MCF 10A (cell line): ENCODE measurements at regions of chr12 and their contacts with region 1.

Region 1: GRCh38 chr12:91382081-91382543 is 199.5 kb upstream of the DCN start:
- DNase-seq: peak; percentile 84
- H3K4me3 Mint-ChIP-seq: peak overlapping the region; percentile 78
- H3K27ac Mint-ChIP-seq: peak overlapping the region; percentile 21
- H3K4me1 Mint-ChIP-seq: peaks cover 19% of the 10 kb centered on the region
- H3K27me3 Mint-ChIP-seq: no peaks in the 10 kb centered on the region
- CTCF ChIP-seq: peak; percentile 85

Region 2: DNA sequence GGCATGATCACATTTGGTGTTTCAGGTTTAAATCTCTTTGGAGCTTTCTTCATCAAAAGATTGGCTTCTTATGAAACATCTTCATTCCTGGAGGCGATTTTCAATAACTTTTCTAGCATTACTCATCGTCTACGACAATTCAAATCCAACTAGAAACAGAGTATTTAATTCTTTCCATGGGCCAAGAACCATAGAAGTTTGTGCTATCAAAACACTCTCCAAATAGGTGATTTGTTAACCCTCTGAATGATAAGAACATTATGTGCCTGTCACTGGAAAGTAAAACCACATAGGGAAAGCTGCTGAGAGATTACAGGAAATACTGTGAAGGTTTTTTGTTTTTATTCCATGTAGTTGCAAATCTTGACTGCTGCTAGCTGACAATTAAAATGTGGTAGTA is 192.6 kb before region 1 on chr12:
- CTCF ChIA-PET with region 1: no interaction called
- POLR2A ChIA-PET with region 1: no interaction called
- intact Hi-C with region 1: no loop called
- DNase-seq: peak; percentile 57
- H3K4me3 Mint-ChIP-seq: peak overlapping the region; percentile 25
- H3K27ac Mint-ChIP-seq: peak overlapping the region; percentile 65
- H3K4me1 Mint-ChIP-seq: peaks cover 21% of the 10 kb centered on the region
- H3K27me3 Mint-ChIP-seq: peaks cover 28% of the 10 kb centered on the region
- CTCF ChIP-seq: no peak

Region 3: DNA sequence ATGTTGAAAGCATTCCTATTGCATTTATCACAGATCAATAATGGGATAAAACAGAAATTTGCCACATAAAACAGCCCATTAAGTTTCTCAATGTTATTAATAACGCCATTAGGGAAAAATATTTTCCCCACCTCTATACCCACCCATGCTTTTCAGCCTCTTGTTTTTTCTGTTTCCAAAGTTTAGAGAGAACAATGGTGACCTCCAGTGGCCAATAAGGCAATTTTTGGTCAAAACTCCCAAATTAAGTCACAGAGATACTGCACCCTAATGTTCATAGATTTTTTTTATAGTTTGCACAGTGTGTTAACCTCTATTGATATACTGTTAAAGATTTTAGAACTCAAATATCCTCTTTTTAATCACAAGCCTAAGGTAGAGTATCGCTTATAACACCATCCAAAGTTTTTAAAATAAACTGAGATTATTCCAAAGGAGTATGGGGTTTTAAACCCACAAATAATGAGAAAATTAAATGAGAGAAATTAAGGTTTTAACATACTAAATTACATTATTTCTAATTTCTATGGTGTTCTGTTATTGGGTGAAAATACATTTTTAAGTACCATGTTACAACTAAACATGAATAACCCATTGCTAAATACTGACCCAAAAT is 14.8 kb before region 1 on chr12:
- CTCF ChIA-PET with region 1: interaction called, 15 read pairs
- POLR2A ChIA-PET with region 1: interaction called, 4 read pairs
- intact Hi-C with region 1: no loop called
- DNase-seq: peak; percentile 38
- H3K4me3 Mint-ChIP-seq: no peak overlapping the region
- H3K27ac Mint-ChIP-seq: no peak overlapping the region
- H3K4me1 Mint-ChIP-seq: peaks cover under 1% of the 10 kb centered on the region
- H3K27me3 Mint-ChIP-seq: no peaks in the 10 kb centered on the region
- CTCF ChIP-seq: peak; percentile 50

Region 4: GRCh38 chr12:91577586-91578539 is 195.8 kb after region 1 on chr12:
- CTCF ChIA-PET with region 1: interaction called, 23 read pairs
- POLR2A ChIA-PET with region 1: interaction called, 21 read pairs
- intact Hi-C with region 1: loop called (anchors 1 kb)
- DNase-seq: peak; percentile 32
- H3K4me3 Mint-ChIP-seq: peak overlapping the region; percentile 57
- H3K27ac Mint-ChIP-seq: peak overlapping the region; percentile 85
- H3K4me1 Mint-ChIP-seq: peaks cover 20% of the 10 kb centered on the region
- H3K27me3 Mint-ChIP-seq: no peaks in the 10 kb centered on the region
- CTCF ChIP-seq: peak; percentile 52

Region 5: DNA sequence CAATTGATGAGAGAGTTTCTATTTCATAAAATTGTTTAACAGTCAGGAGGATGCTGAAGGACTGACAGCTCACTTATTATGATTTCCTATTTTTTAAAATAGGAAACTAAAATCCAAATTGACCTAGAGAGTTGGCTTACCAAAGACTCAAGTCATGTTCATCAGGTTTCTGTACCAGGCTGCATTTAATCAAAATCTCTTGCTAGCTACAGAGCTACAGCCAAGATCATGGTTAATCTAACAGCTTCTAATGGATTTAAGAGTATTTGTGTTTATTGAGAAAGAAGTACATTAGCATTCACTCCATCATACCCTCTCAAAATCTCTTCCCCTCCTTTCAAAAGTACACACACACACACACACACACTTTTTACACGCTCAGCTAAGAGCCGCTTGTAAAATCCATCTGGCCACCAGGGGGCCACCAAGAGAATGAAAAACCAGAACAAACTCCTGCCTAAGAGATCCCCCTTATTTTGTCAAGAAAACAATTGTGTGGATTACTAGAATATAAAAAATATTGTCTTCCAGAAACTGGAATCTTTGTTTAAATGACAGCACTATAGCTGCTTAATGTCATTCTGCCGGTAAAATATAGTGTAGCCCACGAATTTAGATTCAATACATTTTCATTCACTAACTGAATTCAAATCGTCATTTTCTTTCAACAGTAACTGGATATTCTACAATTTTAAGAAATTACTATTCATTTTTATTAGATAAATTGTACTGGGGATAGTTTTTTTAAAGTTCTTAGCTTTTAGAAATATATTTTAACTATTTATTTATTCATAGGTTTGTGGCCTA is 429.6 kb after region 1 on chr12:
- CTCF ChIA-PET with region 1: interaction called, 12 read pairs
- POLR2A ChIA-PET with region 1: interaction called, 11 read pairs
- intact Hi-C with region 1: loop called (anchors 5 kb)
- DNase-seq: peak; percentile 61
- H3K4me3 Mint-ChIP-seq: no peak overlapping the region
- H3K27ac Mint-ChIP-seq: peak overlapping the region; percentile 43
- H3K4me1 Mint-ChIP-seq: peaks cover 11% of the 10 kb centered on the region
- H3K27me3 Mint-ChIP-seq: no peaks in the 10 kb centered on the region
- CTCF ChIP-seq: peak; percentile 57

Region 6: GRCh38 chr12:92136965-92137721 is 755.0 kb after region 1 on chr12:
- CTCF ChIA-PET with region 1: interaction called, 22 read pairs
- POLR2A ChIA-PET with region 1: interaction called, 154 read pairs
- intact Hi-C with region 1: no loop called
- DNase-seq: peak; percentile 72
- H3K4me3 Mint-ChIP-seq: peak overlapping the region; percentile 89
- H3K27ac Mint-ChIP-seq: peak overlapping the region; percentile 74
- H3K4me1 Mint-ChIP-seq: peaks cover 60% of the 10 kb centered on the region
- H3K27me3 Mint-ChIP-seq: no peaks in the 10 kb centered on the region
- CTCF ChIP-seq: no peak

Region 7: GRCh38 chr12:92561543-92561899 is 1179.4 kb after region 1 on chr12:
- CTCF ChIA-PET with region 1: interaction called, 11 read pairs
- POLR2A ChIA-PET with region 1: no interaction called
- intact Hi-C with region 1: no loop called
- DNase-seq: peak; percentile 82
- H3K4me3 Mint-ChIP-seq: no peak overlapping the region
- H3K27ac Mint-ChIP-seq: peak overlapping the region; percentile 79
- H3K4me1 Mint-ChIP-seq: peaks cover 21% of the 10 kb centered on the region
- H3K27me3 Mint-ChIP-seq: no peaks in the 10 kb centered on the region
- CTCF ChIP-seq: no peak

Region 8: GRCh38 chr12:92649511-92650227 is 1267.6 kb after region 1 on chr12:
- CTCF ChIA-PET with region 1: interaction called, 19 read pairs
- POLR2A ChIA-PET with region 1: interaction called, 8 read pairs
- intact Hi-C with region 1: loop called (anchors 2 kb)
- DNase-seq: peak; percentile 88
- H3K4me3 Mint-ChIP-seq: peak overlapping the region; percentile 49
- H3K27ac Mint-ChIP-seq: no peak overlapping the region
- H3K4me1 Mint-ChIP-seq: peaks cover 17% of the 10 kb centered on the region
- H3K27me3 Mint-ChIP-seq: no peaks in the 10 kb centered on the region
- CTCF ChIP-seq: peak; percentile 67